Vagina (tissue), 2 donors: ENCODE measurements at regions of chr9 and their contacts with region 1.

Region 1: GRCh38 chr9:96062031-96062430 is 186.5 kb downstream of the ERCC6L2 start:
- DNase-seq: no peak
- H3K4me3 ChIP-seq: no peak overlapping the region
- H3K27ac ChIP-seq: no peak overlapping the region
- H3K4me1 ChIP-seq: peaks cover 11% of the 10 kb centered on the region
- H3K27me3 ChIP-seq: no peaks in the 10 kb centered on the region
- CTCF ChIP-seq: no peak
- POLR2A ChIP-seq: no peak

Region 2: DNA sequence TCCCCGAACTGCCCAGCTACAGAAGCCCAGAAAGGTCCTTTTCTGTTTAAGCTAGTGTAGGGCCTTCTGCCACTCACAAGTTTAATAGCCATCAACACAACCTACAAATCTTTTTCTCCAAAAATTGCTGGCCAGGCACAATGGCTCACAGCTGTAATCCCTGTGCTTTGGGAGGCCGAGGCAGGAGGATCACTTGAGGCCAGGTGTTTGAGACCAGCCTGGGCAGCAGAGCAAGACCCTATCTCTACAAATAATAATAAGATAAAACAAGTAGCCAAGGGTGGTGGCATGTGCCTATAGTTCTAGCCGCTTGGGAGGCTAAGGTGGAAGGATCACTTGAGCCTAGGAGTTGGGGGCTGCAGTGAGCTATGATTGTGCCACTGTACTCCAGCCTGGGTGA is 63.6 kb after region 1 on chr9:
- intact Hi-C with region 1: loop called (anchors 2 kb)
- DNase-seq: no peak
- H3K4me3 ChIP-seq: no peak overlapping the region
- H3K27ac ChIP-seq: no peak overlapping the region
- H3K4me1 ChIP-seq: no peaks in the 10 kb centered on the region
- H3K27me3 ChIP-seq: no peaks in the 10 kb centered on the region
- CTCF ChIP-seq: no peak
- POLR2A ChIP-seq: no peak